ENCODE measurements at regions of chr9 and their contacts with region 1.

Region 1: GRCh38 chr9:128191406-128192046 is at the start of gene CIZ1:
- DNase-seq: peak; percentile 69
- H3K4me3 Mint-ChIP-seq: peak within 1 kb of the TSS; percentile 94
- H3K27ac Mint-ChIP-seq: peak within 1 kb of the TSS; percentile 83
- H3K4me1 Mint-ChIP-seq: peaks cover 33% of the 10 kb centered on the region
- H3K27me3 Mint-ChIP-seq: no peaks in the 10 kb centered on the region
- total RNA-seq, gene CIZ1: 150 TPM in 2 replicates

Region 2: GRCh38 chr9:128225770-128226407 is 34.4 kb after region 1 on chr9:
- intact Hi-C with region 1: no loop called
- DNase-seq: no peak
- H3K4me3 Mint-ChIP-seq: no peak overlapping the region
- H3K27ac Mint-ChIP-seq: no peak overlapping the region
- H3K4me1 Mint-ChIP-seq: no peaks in the 10 kb centered on the region
- H3K27me3 Mint-ChIP-seq: no peaks in the 10 kb centered on the region

Region 3: GRCh38 chr9:128275996-128276573 is 84.6 kb after region 1 on chr9 and contains the starts of genes GOLGA2 and SWI5:
- intact Hi-C with region 1: loop called (anchors 5 kb)
- DNase-seq: peak; percentile 100
- H3K4me3 Mint-ChIP-seq: peak within 1 kb of the TSS; percentile 97
- H3K27ac Mint-ChIP-seq: peak within 1 kb of the TSS; percentile 89
- H3K4me1 Mint-ChIP-seq: peaks cover 40% of the 10 kb centered on the region
- H3K27me3 Mint-ChIP-seq: no peaks in the 10 kb centered on the region
- total RNA-seq, gene GOLGA2: 44.0 and 47.9 TPM in 2 replicates
- total RNA-seq, gene SWI5: 13.5 and 13.7 TPM in 2 replicates

Region 4: GRCh38 chr9:128286440-128286839 is 94.9 kb after region 1 on chr9:
- intact Hi-C with region 1: no loop called
- DNase-seq: no peak
- H3K4me3 Mint-ChIP-seq: no peak overlapping the region
- H3K27ac Mint-ChIP-seq: no peak overlapping the region
- H3K4me1 Mint-ChIP-seq: no peaks in the 10 kb centered on the region
- H3K27me3 Mint-ChIP-seq: no peaks in the 10 kb centered on the region

Region 5: DNA sequence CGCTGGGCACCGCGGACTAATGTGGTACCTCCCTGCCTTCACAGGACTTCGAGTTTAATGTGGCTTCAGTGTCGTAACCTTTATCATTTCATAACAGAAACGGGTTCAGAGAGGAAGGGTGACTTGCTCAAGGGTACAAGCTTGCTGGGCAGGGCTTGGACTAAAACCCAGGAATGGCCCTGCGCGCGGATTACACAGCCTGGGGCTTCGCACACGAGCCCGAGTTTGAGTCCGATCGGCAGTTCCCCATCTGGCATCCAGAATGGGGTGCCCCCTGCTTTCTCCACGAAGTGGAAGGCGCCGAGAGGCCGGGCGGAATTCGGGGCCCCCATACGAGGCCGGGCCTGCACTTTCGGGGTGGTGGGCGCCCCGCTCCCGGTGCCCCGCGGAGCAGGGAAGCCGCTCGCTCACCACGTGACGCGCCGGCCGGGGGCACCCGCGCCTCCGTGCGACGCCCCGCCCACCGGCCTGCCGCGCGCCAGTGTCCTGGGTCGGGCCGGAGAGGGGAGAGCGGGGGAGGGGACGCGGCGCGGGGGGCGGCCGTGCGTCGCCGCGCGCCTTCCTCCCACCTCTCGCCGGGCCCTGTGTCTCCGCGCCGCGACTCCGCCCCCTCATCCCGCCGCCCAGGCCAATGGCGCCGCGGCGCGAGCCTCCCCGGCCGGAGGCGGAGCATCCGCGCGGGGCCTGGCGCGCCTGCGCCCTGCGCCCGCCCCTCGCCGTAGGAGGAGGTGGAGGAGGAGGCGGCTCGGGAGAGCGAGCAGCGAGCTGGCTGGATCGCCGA is 497.2 kb after region 1 on chr9 and contains the start of gene SET:
- intact Hi-C with region 1: no loop called
- DNase-seq: peak; percentile 92
- H3K4me3 Mint-ChIP-seq: peak within 1 kb of the TSS; percentile 82
- H3K27ac Mint-ChIP-seq: peak within 1 kb of the TSS; percentile 91
- H3K4me1 Mint-ChIP-seq: peaks cover 47% of the 10 kb centered on the region
- H3K27me3 Mint-ChIP-seq: no peaks in the 10 kb centered on the region
- total RNA-seq, gene SET: 749 and 756 TPM in 2 replicates

Region 6: GRCh38 chr9:129406278-129407225 is 1215.0 kb after region 1 on chr9:
- intact Hi-C with region 1: no loop called
- DNase-seq: no peak
- H3K4me3 Mint-ChIP-seq: no peak overlapping the region
- H3K27ac Mint-ChIP-seq: no peak overlapping the region
- H3K4me1 Mint-ChIP-seq: no peaks in the 10 kb centered on the region
- H3K27me3 Mint-ChIP-seq: peaks cover 6% of the 10 kb centered on the region

Measured in activated T-helper 2 cell treated with anti-CD3 and anti-CD28 coated beads, Interferon-gamma antibody, Interleukin-2, Interleukin-4, amounts not matched to agents 10 μg/mL and 5 μg/mL and 100 μg/mL, durations not matched to agents 14 hours and 24 hours and 36 hours (primary cell).